ENCODE measurements at regions of chr1 and their contacts with region 1.

Region 1: DNA sequence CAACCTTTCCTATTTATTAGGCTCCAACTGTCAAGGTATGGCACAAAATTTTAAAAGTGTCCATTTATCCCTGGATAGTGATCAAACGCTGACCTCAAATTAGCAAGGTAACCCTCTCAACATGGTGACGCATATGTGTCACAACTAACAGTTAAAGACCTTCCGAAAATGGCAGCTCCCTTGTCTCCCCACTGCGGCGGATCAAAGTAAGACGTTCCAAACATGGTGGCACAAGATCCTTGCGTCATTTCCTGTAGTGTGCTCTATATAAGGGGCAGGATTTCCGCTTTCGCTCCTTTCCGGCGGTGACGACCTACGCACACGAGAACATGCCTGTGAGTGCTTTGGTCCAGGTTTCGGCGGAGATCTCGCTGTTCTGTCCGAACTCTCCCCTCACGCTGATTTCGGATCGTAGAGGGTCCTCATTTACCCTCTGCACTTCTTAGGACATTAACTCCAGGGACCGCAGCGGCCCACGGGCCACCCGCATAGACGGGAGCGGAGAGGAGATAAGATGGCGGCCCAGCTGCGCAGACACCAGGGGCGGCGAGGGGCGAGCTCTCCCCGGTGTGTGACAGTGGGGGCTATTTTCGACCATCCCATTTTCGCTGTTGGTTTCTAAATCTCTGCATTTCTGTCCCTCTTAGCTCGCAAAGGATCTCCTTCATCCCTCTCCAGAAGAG is at the start of gene RPS27:
- DNase-seq: peak; percentile 77 to 98 (median 86)
- ATAC-seq: peak; percentile 88 to 91 (median 90)
- H3K4me3 ChIP-seq: peak within 1 kb of the TSS; percentile 92 to 100
- H3K4me3 Mint-ChIP-seq: peak within 1 kb of the TSS; percentile 93 to 97 (median 97)
- H3K27ac ChIP-seq: peak within 1 kb of the TSS; percentile 97
- H3K27ac Mint-ChIP-seq: peak within 1 kb of the TSS; percentile 98 to 99
- H3K4me1 ChIP-seq: peaks cover 18 to 46% of the 10 kb centered on the region in 2 experiments
- H3K4me1 Mint-ChIP-seq: peaks cover 51 to 57% (median 52%) of the 10 kb centered on the region in 3 donors
- H3K27me3 ChIP-seq: peaks cover 0 to 3% of the 10 kb centered on the region in 2 experiments
- H3K27me3 Mint-ChIP-seq: peaks cover 3 to 9% of the 10 kb centered on the region in 2 donors
- total RNA-seq, gene RPS27: 4,147 to 5,898 (median 5,716) TPM

Region 2: GRCh38 chr1:153727463-153728304 is 262.9 kb before region 1 on chr1 and contains the start of gene INTS3:
- CTCF ChIA-PET with region 1: no interaction called
- POLR2A ChIA-PET with region 1: interaction called in 1 of 2 experiments, 10 read pairs
- DNase-seq: peak; percentile 97 to 100 (median 100)
- ATAC-seq: peak; percentile 98 to 100 (median 98)
- H3K4me3 ChIP-seq: peak within 1 kb of the TSS; percentile 82 to 92
- H3K4me3 Mint-ChIP-seq: peak within 1 kb of the TSS; percentile 91 to 95 (median 91)
- H3K27ac ChIP-seq: peak within 1 kb of the TSS; percentile 95
- H3K27ac Mint-ChIP-seq: peak within 1 kb of the TSS; percentile 98 to 99
- H3K4me1 ChIP-seq: peaks cover 8 to 26% of the 10 kb centered on the region in 2 experiments
- H3K4me1 Mint-ChIP-seq: peaks cover 24 to 32% (median 31%) of the 10 kb centered on the region in 3 donors
- H3K27me3 ChIP-seq: no peaks in the 10 kb centered on the region
- H3K27me3 Mint-ChIP-seq: no peaks in the 10 kb centered on the region
- total RNA-seq, gene INTS3: 45.9 to 57.7 (median 48.5) TPM

Region 3: DNA sequence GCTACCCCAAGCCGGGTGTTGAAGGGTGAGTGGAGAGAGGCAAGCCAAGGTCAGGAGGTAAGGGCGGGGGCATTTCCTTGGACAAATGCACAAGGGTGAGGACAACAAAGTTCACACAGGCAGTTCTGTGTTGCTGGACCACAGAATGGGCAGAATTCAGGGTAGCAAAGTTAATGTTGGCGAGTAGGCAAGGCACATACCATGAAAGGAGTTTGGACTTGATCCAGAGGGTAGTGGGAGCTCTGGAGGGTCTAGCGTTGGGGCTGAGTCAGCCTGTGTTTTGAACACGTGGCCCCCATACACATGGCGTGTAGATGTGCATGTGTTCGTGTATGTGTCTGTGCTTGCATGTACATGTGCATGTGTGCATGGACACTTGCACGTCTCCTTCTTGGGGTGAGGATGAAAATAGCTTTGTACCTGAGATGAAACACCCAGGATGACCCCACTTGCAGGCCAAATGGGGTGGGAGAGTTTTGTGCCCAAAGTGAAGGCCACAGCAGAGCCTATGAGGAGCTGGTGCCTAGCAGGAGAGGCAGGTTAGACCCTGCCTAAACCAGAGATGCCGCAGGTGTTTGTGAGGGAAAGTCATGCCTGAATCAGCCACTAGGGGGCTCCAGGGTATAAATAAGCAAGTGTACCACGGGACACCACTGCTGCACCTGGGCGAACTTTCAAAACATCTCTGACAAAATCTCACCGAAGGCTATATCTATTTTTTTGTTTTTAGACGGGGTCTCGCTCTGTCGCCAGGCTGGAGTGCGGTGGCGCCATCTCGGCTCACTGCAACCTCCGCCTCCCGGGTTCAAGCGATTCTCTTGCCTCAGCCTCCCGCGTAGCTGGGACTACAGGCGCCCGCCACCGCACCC is 193.6 kb before region 1 on chr1:
- CTCF ChIA-PET with region 1: interaction called, 9 to 11 read pairs
- POLR2A ChIA-PET with region 1: interaction called in 1 of 2 experiments, 5 read pairs
- DNase-seq: peak; percentile 55 to 91 (median 79)
- ATAC-seq: peak; percentile 79 to 90 (median 86)
- H3K4me3 ChIP-seq: no peak overlapping the region
- H3K4me3 Mint-ChIP-seq: no peak overlapping the region
- H3K27ac ChIP-seq: no peak overlapping the region
- H3K27ac Mint-ChIP-seq: peak overlapping the region in 1 of 2 donors; percentile 45
- H3K4me1 ChIP-seq: peaks cover 3 to 34% of the 10 kb centered on the region in 2 experiments
- H3K4me1 Mint-ChIP-seq: peaks cover 13 to 18% (median 16%) of the 10 kb centered on the region in 3 donors
- H3K27me3 ChIP-seq: no peaks in the 10 kb centered on the region
- H3K27me3 Mint-ChIP-seq: no peaks in the 10 kb centered on the region

Region 4: GRCh38 chr1:153805042-153805745 is 185.4 kb before region 1 on chr1:
- CTCF ChIA-PET with region 1: interaction called in 1 of 2 experiments, 6 read pairs
- POLR2A ChIA-PET with region 1: interaction called in 1 of 2 experiments, 13 read pairs
- DNase-seq: peak in 34 of 35 experiments; percentile 34 to 91 (median 72)
- ATAC-seq: peak; percentile 84 to 94 (median 88)
- H3K4me3 ChIP-seq: no peak overlapping the region
- H3K4me3 Mint-ChIP-seq: peak overlapping the region in 2 of 3 donors; percentile 0 to 9
- H3K27ac ChIP-seq: peak overlapping the region; percentile 94
- H3K27ac Mint-ChIP-seq: peak overlapping the region; percentile 87 to 88
- H3K4me1 ChIP-seq: peaks cover 2 to 25% of the 10 kb centered on the region in 2 experiments
- H3K4me1 Mint-ChIP-seq: peaks cover 27 to 45% (median 34%) of the 10 kb centered on the region in 3 donors
- H3K27me3 ChIP-seq: no peaks in the 10 kb centered on the region
- H3K27me3 Mint-ChIP-seq: no peaks in the 10 kb centered on the region

Region 5: GRCh38 chr1:153977250-153978240 is 13.1 kb before region 1 on chr1 and contains the start of gene JTB:
- CTCF ChIA-PET with region 1: interaction called, 3 to 14 read pairs
- POLR2A ChIA-PET with region 1: interaction called, 7 to 20 read pairs
- DNase-seq: peak; percentile 66 to 91 (median 81)
- ATAC-seq: peak; percentile 94 to 98 (median 96)
- H3K4me3 ChIP-seq: peak within 1 kb of the TSS; percentile 93 to 96
- H3K4me3 Mint-ChIP-seq: peak within 1 kb of the TSS; percentile 92 to 97 (median 97)
- H3K27ac ChIP-seq: peak within 1 kb of the TSS; percentile 74
- H3K27ac Mint-ChIP-seq: peak within 1 kb of the TSS; percentile 96 to 98
- H3K4me1 ChIP-seq: peaks cover 15 to 28% of the 10 kb centered on the region in 2 experiments
- H3K4me1 Mint-ChIP-seq: peaks cover 34 to 41% (median 36%) of the 10 kb centered on the region in 3 donors
- H3K27me3 ChIP-seq: no peaks in the 10 kb centered on the region
- H3K27me3 Mint-ChIP-seq: no peaks in the 10 kb centered on the region
- total RNA-seq, gene JTB: 90.4 to 137 (median 129) TPM

Region 6: GRCh38 chr1:154493276-154493675 is 502.7 kb after region 1 on chr1:
- CTCF ChIA-PET with region 1: no interaction called
- POLR2A ChIA-PET with region 1: interaction called in 1 of 2 experiments, 10 read pairs
- DNase-seq: peak in 12 of 35 experiments; percentile 3 to 44 (median 17)
- ATAC-seq: peak; percentile 66 to 79 (median 73)
- H3K4me3 ChIP-seq: peak overlapping the region in 1 of 2 donors; percentile 30
- H3K4me3 Mint-ChIP-seq: peak overlapping the region in 2 of 3 donors; percentile 52 to 62
- H3K27ac ChIP-seq: no peak overlapping the region
- H3K27ac Mint-ChIP-seq: peak overlapping the region; percentile 65 to 85
- H3K4me1 ChIP-seq: peaks cover 27 to 33% of the 10 kb centered on the region in 2 experiments
- H3K4me1 Mint-ChIP-seq: peaks cover 41 to 47% (median 44%) of the 10 kb centered on the region in 3 donors
- H3K27me3 ChIP-seq: no peaks in the 10 kb centered on the region
- H3K27me3 Mint-ChIP-seq: no peaks in the 10 kb centered on the region

Measured in T-cell (primary cell).